Tibial artery (tissue), 4 donors: ENCODE measurements at regions of chr12 and their contacts with region 1.

Region 1: DNA sequence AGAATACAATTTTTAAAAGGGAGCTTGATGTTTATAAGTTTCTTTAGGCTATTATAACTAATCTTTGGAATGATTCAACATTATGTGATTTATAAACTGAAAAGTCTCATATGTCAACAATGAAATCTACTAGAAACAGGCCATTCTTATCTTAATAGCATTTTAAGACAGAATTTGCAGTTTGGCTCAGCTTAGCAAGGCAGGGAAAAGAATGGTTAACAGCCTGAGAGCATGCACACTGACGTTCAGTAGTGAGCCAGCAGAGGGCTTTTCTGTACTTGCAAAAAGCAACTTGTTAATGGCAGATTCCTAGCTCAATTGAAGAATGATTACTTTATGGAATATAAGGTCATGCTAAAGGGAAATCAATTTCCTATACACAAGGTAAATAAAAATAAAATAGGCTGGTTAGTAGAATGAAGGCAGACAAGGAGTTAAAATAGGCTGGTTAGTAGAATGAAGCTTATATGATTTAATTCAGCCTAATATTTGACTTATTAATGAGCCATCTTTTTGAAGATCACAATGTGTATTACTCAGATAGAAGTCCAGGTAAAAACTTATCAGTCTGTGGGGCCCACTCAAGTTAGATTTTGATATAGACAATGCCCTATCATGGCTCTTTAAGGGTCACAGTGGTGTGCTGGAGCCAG is 95.9 kb downstream of the OTOGL start:
- DNase-seq: no peak
- H3K4me3 ChIP-seq: no peak overlapping the region
- H3K27ac ChIP-seq: no peak overlapping the region
- H3K4me1 ChIP-seq: peaks cover 0 to 10% (median 6%) of the 10 kb centered on the region in 4 donors
- H3K27me3 ChIP-seq: no peaks in the 10 kb centered on the region
- CTCF ChIP-seq: peak; percentile 41 to 46

Region 2: GRCh38 chr12:80142640-80143039 is 52.6 kb before region 1 on chr12:
- intact Hi-C with region 1: no loop called
- DNase-seq: no peak
- H3K4me3 ChIP-seq: no peak overlapping the region
- H3K27ac ChIP-seq: no peak overlapping the region
- H3K4me1 ChIP-seq: no peaks in the 10 kb centered on the region
- H3K27me3 ChIP-seq: no peaks in the 10 kb centered on the region
- CTCF ChIP-seq: no peak

Region 3: DNA sequence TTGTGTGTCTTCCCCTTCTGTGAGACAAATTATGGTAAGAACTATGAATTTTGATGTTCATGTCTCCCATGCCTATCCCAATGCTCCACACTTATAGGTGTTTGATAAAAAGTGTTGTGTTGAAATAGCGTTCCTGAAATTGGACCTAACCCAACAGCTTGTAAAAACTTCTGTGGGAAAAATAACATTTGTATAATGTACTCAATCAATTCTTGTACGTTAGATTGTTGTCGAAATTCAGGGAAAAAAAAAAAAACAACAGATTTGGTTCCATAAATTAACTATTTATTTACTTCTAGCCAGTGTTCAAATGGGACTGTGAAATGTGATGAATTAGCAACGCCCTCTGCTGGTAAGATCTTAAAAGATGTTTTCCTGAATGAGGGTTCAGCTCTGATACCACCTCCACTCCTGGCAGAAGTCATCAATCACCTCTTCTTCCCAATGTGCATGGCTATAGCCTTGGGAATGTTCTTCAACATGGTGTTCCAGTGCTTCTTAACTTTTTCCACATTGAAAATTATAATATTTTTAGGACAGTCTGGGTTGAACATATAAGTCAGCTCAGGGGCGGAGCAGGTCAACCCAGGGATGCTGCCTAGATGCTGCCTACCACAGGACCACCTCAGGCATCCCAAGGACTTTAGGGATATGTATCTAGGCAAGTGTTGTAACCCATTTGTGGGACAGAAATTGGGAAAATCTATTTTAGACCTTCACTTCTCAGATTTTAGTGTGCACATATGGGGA is 74.8 kb after region 1 on chr12:
- intact Hi-C with region 1: loop called (anchors 5 kb)
- DNase-seq: no peak
- H3K4me3 ChIP-seq: no peak overlapping the region
- H3K27ac ChIP-seq: no peak overlapping the region
- H3K4me1 ChIP-seq: peaks cover 0 to 11% (median 2%) of the 10 kb centered on the region in 4 donors
- H3K27me3 ChIP-seq: no peaks in the 10 kb centered on the region
- CTCF ChIP-seq: peak; percentile 50 to 56